ENCODE measurements at regions of chr16 and their contacts with region 1.

Region 1: DNA sequence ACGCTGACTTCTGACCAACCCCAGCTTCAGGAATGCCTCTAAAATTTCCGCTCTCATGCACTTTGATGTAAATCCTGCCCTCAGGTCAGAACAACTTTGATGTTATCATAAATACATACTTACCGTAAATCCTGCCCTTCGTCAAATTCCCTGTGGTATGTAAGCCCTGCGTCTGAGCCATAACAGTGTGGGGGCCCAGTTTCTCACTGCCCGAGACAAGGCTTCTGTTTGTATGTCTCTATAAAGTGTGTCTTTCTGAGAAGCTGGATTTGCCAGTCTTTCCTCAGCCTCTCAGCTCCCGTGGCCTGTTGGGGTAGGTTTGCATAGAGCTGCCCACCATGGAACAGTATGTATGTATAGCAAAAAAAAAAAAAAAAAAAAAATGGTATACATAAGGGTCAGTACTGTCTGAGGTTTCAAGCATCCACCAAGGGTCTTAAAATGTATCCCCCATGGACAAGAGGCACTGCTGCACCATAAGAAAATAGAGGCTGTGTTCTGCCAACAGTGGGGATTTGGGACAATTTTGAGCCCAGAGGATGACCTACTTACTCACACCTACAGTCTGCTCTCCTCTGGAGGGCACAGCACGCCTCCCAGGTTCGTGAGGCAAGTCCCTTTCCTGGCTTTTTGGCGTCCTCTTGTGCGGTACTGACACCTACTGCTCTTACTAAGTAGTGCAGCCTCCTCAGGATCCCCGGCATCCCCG is 17.5 kb downstream of the PRMT7 start:
- DNase-seq: peak; percentile 88 to 90
- ATAC-seq: peak; percentile 98 to 99
- H3K4me3 ChIP-seq: no peak overlapping the region
- H3K27ac ChIP-seq: no peak overlapping the region
- H3K4me1 ChIP-seq: peaks cover 5% of the 10 kb centered on the region; the same call in 1 of the 3 replicates
- CTCF ChIP-seq: peak; percentile 88
- EP300 ChIP-seq: no peak
- POLR2A ChIP-seq: no peak
- RAD21 ChIP-seq: peak; percentile 89 to 94

Region 2: GRCh38 chr16:68015396-68016105 is 312.8 kb before region 1 on chr16 and contains the start of gene DPEP2NB:
- CTCF ChIA-PET with region 1: no interaction called
- POLR2A ChIA-PET with region 1: no interaction called
- DNase-seq: no peak
- ATAC-seq: peak; percentile 37 to 42; a peak in 4 of 6 replicates
- H3K4me3 ChIP-seq: no peak within 1 kb of the TSS
- H3K27ac ChIP-seq: no peak within 1 kb of the TSS
- H3K4me1 ChIP-seq: no peaks in the 10 kb centered on the region
- CTCF ChIP-seq: no peak
- EP300 ChIP-seq: no peak
- POLR2A ChIP-seq: no peak
- RAD21 ChIP-seq: no peak
- polyA plus RNA-seq, gene DPEP2NB: not detected in 2 replicates

Region 3: GRCh38 chr16:68237243-68238028 is 90.9 kb before region 1 on chr16:
- CTCF ChIA-PET with region 1: interaction called, 70 read pairs
- POLR2A ChIA-PET with region 1: interaction called, 4 read pairs
- DNase-seq: peak; percentile 95 to 99
- ATAC-seq: peak; percentile 85 to 94
- H3K4me3 ChIP-seq: peak overlapping the region; percentile 48
- H3K27ac ChIP-seq: peak overlapping the region; percentile 93 to 94
- H3K4me1 ChIP-seq: peaks cover 15% of the 10 kb centered on the region
- CTCF ChIP-seq: no peak
- EP300 ChIP-seq: no peak
- POLR2A ChIP-seq: peak; percentile 97
- RAD21 ChIP-seq: no peak

Region 4: DNA sequence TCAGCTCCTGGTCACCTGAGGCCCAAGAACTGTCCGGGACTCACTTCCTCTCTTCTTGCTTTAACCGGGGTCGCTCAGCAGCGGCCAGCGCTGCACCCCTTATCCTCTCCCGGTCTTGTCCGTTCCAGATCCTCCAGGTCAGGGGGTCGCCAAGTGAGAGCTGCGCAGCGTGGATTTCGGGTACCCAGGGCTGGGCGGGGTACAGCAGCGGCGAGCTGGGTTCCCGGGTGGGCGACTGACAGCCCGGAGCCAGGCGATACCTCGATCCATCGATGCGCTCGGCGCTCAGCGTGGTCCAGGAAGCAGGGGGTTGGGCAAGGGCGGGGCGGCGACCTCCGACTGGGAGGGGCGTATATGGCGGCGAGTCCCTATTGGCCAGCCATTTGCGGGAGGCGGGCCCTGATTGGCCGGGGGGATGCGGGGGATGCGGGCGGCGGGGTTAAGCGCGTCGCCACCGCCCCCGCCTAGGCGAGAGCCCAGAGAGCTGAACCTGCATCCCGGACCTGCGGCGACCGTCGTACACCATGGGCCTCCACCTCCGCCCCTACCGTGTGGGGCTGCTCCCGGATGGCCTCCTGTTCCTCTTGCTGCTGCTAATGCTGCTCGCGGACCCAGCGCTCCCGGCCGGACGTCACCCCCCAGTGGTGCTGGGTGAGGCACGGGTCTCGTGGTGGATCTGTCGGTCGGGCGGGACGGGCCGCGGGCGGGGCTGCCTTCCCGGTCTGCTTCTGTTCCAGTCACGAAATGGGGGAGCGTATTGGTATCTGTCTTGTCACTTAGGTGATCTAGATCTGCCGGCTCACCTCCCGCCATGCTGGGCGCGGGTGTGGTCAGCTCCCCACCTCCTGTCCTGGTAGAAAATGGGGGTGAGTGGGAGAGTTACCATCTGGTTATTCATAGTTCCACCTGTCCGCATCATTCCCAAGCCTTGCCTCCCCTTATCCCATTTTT is 83.1 kb before region 1 on chr16 and contains the start of gene PLA2G15:
- CTCF ChIA-PET with region 1: interaction called, 70 read pairs
- POLR2A ChIA-PET with region 1: no interaction called
- DNase-seq: peak; percentile 89 to 95
- ATAC-seq: peak; percentile 92 to 96
- H3K4me3 ChIP-seq: peak within 1 kb of the TSS; percentile 75
- H3K27ac ChIP-seq: peak within 1 kb of the TSS; percentile 69 to 87
- H3K4me1 ChIP-seq: peaks cover 12% of the 10 kb centered on the region; the same call in 2 of the 3 replicates
- CTCF ChIP-seq: no peak
- EP300 ChIP-seq: no peak
- POLR2A ChIP-seq: peak; percentile 55
- RAD21 ChIP-seq: no peak
- polyA plus RNA-seq, gene PLA2G15: 4.8 and 5.7 TPM in 2 replicates

Region 5: GRCh38 chr16:68310761-68311511 is 17.4 kb before region 1 on chr16 and contains the starts of genes PRMT7 and SLC7A6OS:
- CTCF ChIA-PET with region 1: interaction called, 21 read pairs
- POLR2A ChIA-PET with region 1: interaction called, 9 read pairs
- DNase-seq: peak; percentile 89 to 98
- ATAC-seq: peak; percentile 99 to 100
- H3K4me3 ChIP-seq: peak within 1 kb of the TSS; percentile 91
- H3K27ac ChIP-seq: peak within 1 kb of the TSS; percentile 83 to 90
- H3K4me1 ChIP-seq: peaks cover 21% of the 10 kb centered on the region
- CTCF ChIP-seq: no peak
- EP300 ChIP-seq: no peak
- POLR2A ChIP-seq: peak; percentile 91
- RAD21 ChIP-seq: no peak
- polyA plus RNA-seq, gene PRMT7: 37.1 and 37.6 TPM in 2 replicates
- polyA plus RNA-seq, gene SLC7A6OS: 11.0 and 11.9 TPM in 2 replicates

Region 6: DNA sequence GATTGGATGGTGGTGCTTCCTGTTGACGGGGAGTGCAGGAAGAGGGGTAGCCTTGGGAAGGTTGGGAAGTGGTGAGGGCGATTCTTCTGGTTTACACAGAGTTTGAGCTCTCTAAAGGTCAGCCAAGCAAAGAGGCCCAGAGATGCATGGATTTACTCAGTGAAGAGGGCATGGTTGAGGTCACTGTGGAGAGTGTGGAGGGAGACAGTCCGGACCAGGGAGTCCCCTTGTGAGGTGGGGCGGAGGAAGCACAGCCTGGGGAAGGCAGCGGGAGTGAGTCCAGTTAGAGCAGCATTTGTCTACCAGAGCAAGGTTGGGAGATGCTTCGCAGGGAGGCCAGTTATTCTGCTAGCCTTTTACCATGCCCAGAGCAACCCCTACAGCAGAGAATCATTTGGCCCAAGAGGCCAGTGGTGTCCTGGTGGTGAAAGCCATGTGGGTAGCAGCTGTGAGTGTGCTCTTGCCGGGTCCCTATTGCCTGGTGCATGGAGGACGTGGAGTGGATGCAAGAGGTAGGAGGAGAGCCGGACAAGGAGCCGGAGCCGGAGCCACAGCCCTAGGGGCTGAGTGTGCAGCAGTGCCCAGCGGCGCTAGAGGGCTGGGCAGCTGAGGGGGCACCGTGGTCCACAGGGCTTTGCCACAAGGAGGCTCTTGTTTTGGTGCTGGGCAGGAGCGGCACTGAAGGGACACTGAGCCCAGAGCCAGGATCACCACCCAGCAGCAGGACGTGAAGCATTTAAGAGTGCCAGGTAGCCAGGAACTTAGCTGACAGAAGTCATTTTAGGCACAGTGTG is 10.2 kb after region 1 on chr16:
- CTCF ChIA-PET with region 1: interaction called, 41 read pairs
- POLR2A ChIA-PET with region 1: no interaction called
- DNase-seq: no peak
- ATAC-seq: no peak; a peak in 1 of 6 replicates
- H3K4me3 ChIP-seq: no peak overlapping the region
- H3K27ac ChIP-seq: no peak overlapping the region
- H3K4me1 ChIP-seq: no peaks in the 10 kb centered on the region
- CTCF ChIP-seq: no peak
- EP300 ChIP-seq: no peak
- POLR2A ChIP-seq: no peak
- RAD21 ChIP-seq: no peak

Region 7: GRCh38 chr16:68345351-68345810 is 17.1 kb after region 1 on chr16:
- CTCF ChIA-PET with region 1: interaction called, 41 read pairs
- POLR2A ChIA-PET with region 1: no interaction called
- DNase-seq: no peak
- ATAC-seq: no peak
- H3K4me3 ChIP-seq: no peak overlapping the region
- H3K27ac ChIP-seq: no peak overlapping the region
- H3K4me1 ChIP-seq: no peaks in the 10 kb centered on the region
- CTCF ChIP-seq: no peak
- EP300 ChIP-seq: no peak
- POLR2A ChIP-seq: no peak
- RAD21 ChIP-seq: no peak

Measured in A549 (cell line).